ENCODE measurements at regions of chr3 and their contacts with region 1.

Region 1: GRCh38 chr3:183555541-183556081 is at the start of gene KLHL6:
- DNase-seq: peak; percentile 44 to 88 (median 76)
- ATAC-seq: peak; percentile 84
- H3K4me3 ChIP-seq: peak within 1 kb of the TSS; percentile 68 to 71
- H3K4me3 Mint-ChIP-seq: peak within 1 kb of the TSS; percentile 93
- H3K27ac ChIP-seq: peak within 1 kb of the TSS; percentile 73 to 91
- H3K27ac Mint-ChIP-seq: peak within 1 kb of the TSS; percentile 98
- H3K4me1 ChIP-seq: peaks cover 32% of the 10 kb centered on the region
- H3K4me1 Mint-ChIP-seq: peaks cover 53% of the 10 kb centered on the region
- H3K27me3 ChIP-seq: no peaks in the 10 kb centered on the region
- H3K27me3 Mint-ChIP-seq: no peaks in the 10 kb centered on the region
- CTCF ChIP-seq: peak; percentile 22
- total RNA-seq, gene KLHL6: 27.7 to 29.7 TPM

Region 2: DNA sequence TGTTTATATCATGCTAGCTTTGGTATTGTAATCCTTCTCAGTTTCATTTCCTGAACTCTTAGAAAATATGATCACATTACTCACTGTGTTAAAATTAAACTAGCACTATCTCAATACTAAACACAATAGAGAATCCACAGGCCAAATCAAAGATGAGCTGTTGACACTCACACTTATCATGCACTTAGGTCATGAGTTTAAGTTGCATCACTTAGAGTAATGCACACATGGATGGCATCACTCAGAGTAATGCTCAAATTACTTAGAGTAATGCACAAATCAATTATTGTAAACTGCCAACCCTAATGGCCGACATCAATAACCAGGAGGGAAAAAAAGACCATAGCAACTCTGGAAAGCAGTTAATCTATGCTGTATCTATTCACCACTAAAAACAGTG is 87.2 kb before region 1 on chr3:
- CTCF ChIA-PET with region 1: interaction called, 49 read pairs
- POLR2A ChIA-PET with region 1: no interaction called
- intact Hi-C with region 1: loop called (anchors 1 kb)
- DNase-seq: no peak
- ATAC-seq: no peak
- H3K4me3 ChIP-seq: no peak overlapping the region
- H3K4me3 Mint-ChIP-seq: no peak overlapping the region
- H3K27ac ChIP-seq: no peak overlapping the region
- H3K27ac Mint-ChIP-seq: no peak overlapping the region
- H3K4me1 ChIP-seq: peaks cover 3% of the 10 kb centered on the region
- H3K4me1 Mint-ChIP-seq: peaks cover 5% of the 10 kb centered on the region
- H3K27me3 ChIP-seq: no peaks in the 10 kb centered on the region
- H3K27me3 Mint-ChIP-seq: peaks cover 2% of the 10 kb centered on the region
- CTCF ChIP-seq: no peak

Region 3: GRCh38 chr3:183515968-183516851 is 39.4 kb before region 1 on chr3:
- CTCF ChIA-PET with region 1: interaction called, 3 read pairs
- POLR2A ChIA-PET with region 1: no interaction called
- intact Hi-C with region 1: loop called (anchors 1 to 2 kb)
- DNase-seq: peak; percentile 34 to 91 (median 71)
- ATAC-seq: peak; percentile 72
- H3K4me3 ChIP-seq: no peak overlapping the region
- H3K4me3 Mint-ChIP-seq: peak overlapping the region; percentile 24
- H3K27ac ChIP-seq: peak overlapping the region; percentile 56 to 68
- H3K27ac Mint-ChIP-seq: peak overlapping the region; percentile 92
- H3K4me1 ChIP-seq: peaks cover 66% of the 10 kb centered on the region
- H3K4me1 Mint-ChIP-seq: peaks cover 76% of the 10 kb centered on the region
- H3K27me3 ChIP-seq: no peaks in the 10 kb centered on the region
- H3K27me3 Mint-ChIP-seq: no peaks in the 10 kb centered on the region
- CTCF ChIP-seq: peak; percentile 31

Region 4: GRCh38 chr3:183540501-183541234 is 14.9 kb before region 1 on chr3:
- CTCF ChIA-PET with region 1: interaction called, 7 read pairs
- POLR2A ChIA-PET with region 1: interaction called, 7 read pairs
- intact Hi-C with region 1: loop called in 1 of 2 experiments (anchors 2 kb)
- DNase-seq: peak in 2 of 9 experiments; percentile 14 to 43
- ATAC-seq: peak; percentile 27
- H3K4me3 ChIP-seq: no peak overlapping the region
- H3K4me3 Mint-ChIP-seq: peak overlapping the region; percentile 50
- H3K27ac ChIP-seq: peak overlapping the region in 1 of 2 experiments; percentile 28
- H3K27ac Mint-ChIP-seq: peak overlapping the region; percentile 86
- H3K4me1 ChIP-seq: peaks cover 41% of the 10 kb centered on the region
- H3K4me1 Mint-ChIP-seq: peaks cover 90% of the 10 kb centered on the region
- H3K27me3 ChIP-seq: no peaks in the 10 kb centered on the region
- H3K27me3 Mint-ChIP-seq: no peaks in the 10 kb centered on the region
- CTCF ChIP-seq: no peak

Region 5: DNA sequence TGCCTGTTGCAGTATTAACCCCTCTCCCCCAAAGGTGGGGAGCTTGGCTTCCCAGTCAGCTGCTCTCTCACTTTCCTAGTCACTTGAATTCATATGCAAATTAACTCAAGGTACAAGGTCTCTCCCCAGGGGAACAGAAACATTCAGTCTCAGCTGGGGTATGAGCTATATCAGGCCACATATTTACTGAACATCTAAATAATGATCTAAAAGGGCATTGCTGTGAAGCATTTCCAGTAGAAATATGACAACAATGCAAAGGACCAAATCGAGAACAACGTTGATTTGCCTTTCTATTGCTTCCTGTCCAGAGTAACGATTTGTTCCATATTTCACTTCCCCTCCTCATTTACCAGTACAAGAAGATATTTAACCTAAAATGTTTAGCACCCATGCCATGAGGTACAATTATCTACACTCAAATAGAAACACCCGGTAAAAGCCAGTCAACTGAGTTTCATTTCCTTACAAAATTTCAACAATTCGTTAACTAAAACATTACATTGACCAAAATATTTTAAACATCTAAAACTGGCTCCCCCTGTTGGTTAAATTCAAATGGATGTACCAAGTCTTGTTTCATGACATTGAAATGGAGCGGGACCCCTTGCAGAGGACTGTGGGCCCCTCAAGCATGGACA is 36.4 kb after region 1 on chr3:
- CTCF ChIA-PET with region 1: no interaction called
- POLR2A ChIA-PET with region 1: no interaction called
- intact Hi-C with region 1: loop called in 1 of 2 experiments (anchors 2 kb)
- DNase-seq: peak in 3 of 9 experiments; percentile 7 to 56 (median 38)
- ATAC-seq: no peak
- H3K4me3 ChIP-seq: no peak overlapping the region
- H3K4me3 Mint-ChIP-seq: peak overlapping the region; percentile 71
- H3K27ac ChIP-seq: no peak overlapping the region
- H3K27ac Mint-ChIP-seq: no peak overlapping the region
- H3K4me1 ChIP-seq: peaks cover 21% of the 10 kb centered on the region
- H3K4me1 Mint-ChIP-seq: peaks cover 24% of the 10 kb centered on the region
- H3K27me3 ChIP-seq: no peaks in the 10 kb centered on the region
- H3K27me3 Mint-ChIP-seq: no peaks in the 10 kb centered on the region
- CTCF ChIP-seq: no peak

Region 6: DNA sequence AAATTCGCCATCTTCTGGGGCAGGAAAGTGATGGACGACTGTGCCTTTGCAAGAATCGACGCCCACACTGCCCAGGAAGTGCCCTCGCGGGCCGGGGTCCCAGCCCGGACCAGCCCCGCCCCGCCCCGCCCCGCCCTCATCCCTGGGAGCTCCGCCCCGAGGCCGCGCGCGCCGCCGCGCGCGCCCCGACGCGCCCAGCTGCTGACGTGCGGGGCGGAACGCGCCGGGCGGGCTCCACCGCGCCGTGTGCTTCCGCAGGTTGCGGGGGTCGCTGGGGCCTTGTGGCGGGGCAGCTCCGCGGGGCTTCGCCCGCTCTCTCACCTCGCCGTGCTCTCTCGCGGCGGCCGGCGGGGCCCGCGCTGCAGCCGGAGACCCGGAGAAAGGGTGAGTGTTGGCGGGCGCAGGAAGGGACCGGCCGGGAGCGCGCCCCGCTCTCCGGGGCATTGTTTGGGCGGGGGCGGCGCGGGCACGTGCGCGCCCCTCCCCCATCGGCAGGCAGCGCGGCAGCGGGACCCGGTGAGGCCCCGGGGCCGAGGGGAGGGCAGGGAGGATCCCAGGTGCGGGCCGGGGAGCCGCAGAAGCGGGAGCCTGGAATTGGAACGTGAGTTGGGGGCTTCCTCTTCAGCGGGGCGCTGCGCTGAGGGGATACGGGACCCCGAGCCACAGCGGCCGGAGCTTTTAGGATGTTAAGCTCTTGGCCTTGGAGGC is 142.2 kb after region 1 on chr3 and contains the start of gene YEATS2:
- CTCF ChIA-PET with region 1: interaction called, 3 read pairs
- POLR2A ChIA-PET with region 1: no interaction called
- intact Hi-C with region 1: loop called in 1 of 2 experiments (anchors 2 kb)
- DNase-seq: peak; percentile 28 to 85 (median 62)
- ATAC-seq: peak; percentile 86
- H3K4me3 ChIP-seq: peak within 1 kb of the TSS; percentile 90 to 93
- H3K4me3 Mint-ChIP-seq: peak within 1 kb of the TSS; percentile 99
- H3K27ac ChIP-seq: peak within 1 kb of the TSS; percentile 69 to 74
- H3K27ac Mint-ChIP-seq: peak within 1 kb of the TSS; percentile 94
- H3K4me1 ChIP-seq: peaks cover 19% of the 10 kb centered on the region
- H3K4me1 Mint-ChIP-seq: peaks cover 31% of the 10 kb centered on the region
- H3K27me3 ChIP-seq: no peaks in the 10 kb centered on the region
- H3K27me3 Mint-ChIP-seq: no peaks in the 10 kb centered on the region
- CTCF ChIP-seq: no peak
- total RNA-seq, gene YEATS2: 12.1 to 12.4 TPM

Region 7: GRCh38 chr3:184099806-184100686 is 544.4 kb after region 1 on chr3:
- CTCF ChIA-PET with region 1: no interaction called
- POLR2A ChIA-PET with region 1: no interaction called
- intact Hi-C with region 1: no loop called
- DNase-seq: no peak
- ATAC-seq: no peak
- H3K4me3 ChIP-seq: no peak overlapping the region
- H3K4me3 Mint-ChIP-seq: no peak overlapping the region
- H3K27ac ChIP-seq: no peak overlapping the region
- H3K27ac Mint-ChIP-seq: no peak overlapping the region
- H3K4me1 ChIP-seq: no peaks in the 10 kb centered on the region
- H3K4me1 Mint-ChIP-seq: no peaks in the 10 kb centered on the region
- H3K27me3 ChIP-seq: no peaks in the 10 kb centered on the region
- H3K27me3 Mint-ChIP-seq: peaks cover 4% of the 10 kb centered on the region
- CTCF ChIP-seq: no peak

Measured in CD8-positive, alpha-beta T cell (primary cell).